GM12878 (cell line): ENCODE measurements at regions of chr6 and their contacts with region 1.

Region 1: GRCh38 chr6:157873735-157874344 is 50.8 kb downstream of the SNX9 start:
- DNase-seq: peak; percentile 16
- ATAC-seq: peak; percentile 99
- H3K4me3 ChIP-seq: no peak overlapping the region
- H3K27ac ChIP-seq: no peak overlapping the region
- H3K4me1 ChIP-seq: peaks cover 3% of the 10 kb centered on the region; the same call in 1 of the 2 replicates
- H3K27me3 ChIP-seq: peaks cover 0 to 2% of the 10 kb centered on the region in 2 experiments; a peak in 2 of 4 replicates
- CTCF ChIP-seq: peak; percentile 82 to 91 (median 84)
- EP300 ChIP-seq: no peak
- POLR2A ChIP-seq: no peak
- RAD21 ChIP-seq: peak; percentile 86

Region 2: DNA sequence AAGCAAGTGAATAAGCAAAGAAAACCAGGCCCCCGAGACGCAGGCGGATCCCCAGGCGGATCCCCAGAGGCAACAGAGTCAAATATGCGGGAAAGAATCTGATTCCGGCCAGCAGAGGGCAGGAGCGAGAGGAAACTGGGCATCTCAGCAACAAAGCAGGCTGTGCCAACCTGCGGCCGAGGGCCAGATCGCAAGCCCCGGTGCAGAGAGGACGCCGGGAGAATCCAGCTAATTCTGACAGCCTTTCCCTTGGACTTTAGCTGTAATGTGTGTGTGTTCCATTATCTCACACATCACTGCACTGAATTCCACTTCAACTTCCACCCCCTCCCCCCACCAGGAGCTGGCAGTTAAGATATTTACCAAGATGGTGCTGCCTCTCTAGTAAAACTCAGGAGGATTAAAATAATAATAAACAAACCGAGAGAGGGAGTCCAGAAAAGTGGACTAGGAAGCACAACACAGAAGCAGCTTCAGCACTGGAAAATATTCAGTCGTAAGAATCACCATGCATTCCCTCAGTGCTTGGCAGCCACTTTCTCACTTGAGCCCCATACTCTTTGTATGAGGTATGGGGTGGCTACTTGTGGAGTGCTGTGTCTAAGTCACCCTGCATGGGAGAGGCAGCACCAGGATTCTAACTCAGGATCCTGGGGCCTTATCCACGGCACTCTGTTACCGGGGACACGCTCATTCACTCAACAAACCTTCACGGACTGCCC is 117.0 kb before region 1 on chr6:
- CTCF ChIA-PET with region 1: interaction called, 197 read pairs
- POLR2A ChIA-PET with region 1: no interaction called
- RAD21 ChIA-PET with region 1: interaction called, 105 read pairs
- SMC1A ChIA-PET with region 1: interaction called, 208 read pairs
- in situ Hi-C with region 1: loop called (anchors 5 kb)
- intact Hi-C with region 1: loop called (anchors 1 kb)
- DNase-seq: no peak
- ATAC-seq: peak; percentile 71
- H3K4me3 ChIP-seq: no peak overlapping the region
- H3K27ac ChIP-seq: no peak overlapping the region
- H3K4me1 ChIP-seq: peaks cover 17% of the 10 kb centered on the region
- H3K27me3 ChIP-seq: peaks cover 0 to 3% of the 10 kb centered on the region in 2 experiments; a peak in 2 of 4 replicates
- CTCF ChIP-seq: peak; percentile 74 to 88 (median 79)
- EP300 ChIP-seq: no peak
- POLR2A ChIP-seq: no peak
- RAD21 ChIP-seq: peak; percentile 74

Region 3: GRCh38 chr6:157770946-157771345 is 102.9 kb before region 1 on chr6:
- CTCF ChIA-PET with region 1: interaction called, 12 read pairs
- POLR2A ChIA-PET with region 1: no interaction called
- RAD21 ChIA-PET with region 1: interaction called, 6 read pairs
- SMC1A ChIA-PET with region 1: interaction called, 208 read pairs
- in situ Hi-C with region 1: no loop called
- intact Hi-C with region 1: no loop called
- DNase-seq: no peak
- ATAC-seq: no peak
- H3K4me3 ChIP-seq: no peak overlapping the region
- H3K27ac ChIP-seq: no peak overlapping the region
- H3K4me1 ChIP-seq: peaks cover 22% of the 10 kb centered on the region
- H3K27me3 ChIP-seq: no peaks in the 10 kb centered on the region; a peak in 1 of 4 replicates
- CTCF ChIP-seq: no peak
- EP300 ChIP-seq: no peak
- POLR2A ChIP-seq: no peak
- RAD21 ChIP-seq: no peak

Region 4: DNA sequence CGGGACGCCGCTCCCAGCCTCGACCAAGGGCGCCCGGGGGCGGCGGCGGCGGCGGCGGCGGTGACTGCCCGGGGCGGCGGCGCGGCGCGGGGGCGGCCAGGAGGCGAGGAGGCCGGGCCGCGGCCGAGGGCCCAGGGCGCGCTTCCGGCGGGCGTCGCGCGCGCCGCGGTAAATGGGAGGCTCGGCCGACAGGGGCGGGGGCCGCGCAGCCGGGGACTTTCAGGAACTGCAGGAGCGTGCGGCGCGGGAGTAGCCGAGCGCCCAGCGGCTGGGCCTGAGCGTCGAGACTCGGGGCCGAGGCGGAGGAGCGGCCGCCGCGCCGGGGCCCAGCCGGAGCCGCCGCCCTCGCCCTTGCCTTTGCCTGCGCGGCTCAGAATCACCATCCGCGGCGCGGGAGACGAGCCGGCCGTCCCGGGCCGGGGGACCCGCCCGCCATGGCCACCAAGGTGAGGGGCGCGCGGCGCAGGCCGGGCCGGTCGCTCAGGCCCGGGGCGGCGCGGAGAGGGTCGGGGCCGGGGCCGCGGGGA is 50.8 kb before region 1 on chr6 and contains the start of gene SNX9:
- CTCF ChIA-PET with region 1: no interaction called
- POLR2A ChIA-PET with region 1: no interaction called
- RAD21 ChIA-PET with region 1: interaction called, 4 read pairs
- SMC1A ChIA-PET with region 1: interaction called, 10 read pairs
- in situ Hi-C with region 1: no loop called
- intact Hi-C with region 1: no loop called
- DNase-seq: no peak
- ATAC-seq: peak; percentile 72
- H3K4me3 ChIP-seq: peak within 1 kb of the TSS; percentile 65
- H3K27ac ChIP-seq: no peak within 1 kb of the TSS
- H3K4me1 ChIP-seq: no peaks in the 10 kb centered on the region; the same call in 1 of the 2 replicates
- H3K27me3 ChIP-seq: peaks cover 0 to 24% of the 10 kb centered on the region in 2 experiments; a peak in 2 of 4 replicates
- CTCF ChIP-seq: no peak
- EP300 ChIP-seq: no peak
- POLR2A ChIP-seq: peak; percentile 58
- RAD21 ChIP-seq: no peak
- polyA plus RNA-seq, gene SNX9: 0.03 to 0.05 TPM

Region 5: GRCh38 chr6:157885211-157885788 is 11.5 kb after region 1 on chr6:
- CTCF ChIA-PET with region 1: interaction called, 26 read pairs
- POLR2A ChIA-PET with region 1: no interaction called
- RAD21 ChIA-PET with region 1: no interaction called
- SMC1A ChIA-PET with region 1: interaction called, 16 read pairs
- in situ Hi-C with region 1: no loop called
- intact Hi-C with region 1: no loop called
- DNase-seq: no peak
- ATAC-seq: peak; percentile 40; the same call in 1 of the 3 replicates
- H3K4me3 ChIP-seq: no peak overlapping the region
- H3K27ac ChIP-seq: no peak overlapping the region
- H3K4me1 ChIP-seq: no peaks in the 10 kb centered on the region
- H3K27me3 ChIP-seq: peaks cover 2% of the 10 kb centered on the region in 2 experiments; a peak in 3 of 4 replicates
- CTCF ChIP-seq: no peak
- EP300 ChIP-seq: no peak
- POLR2A ChIP-seq: no peak
- RAD21 ChIP-seq: no peak

Region 6: GRCh38 chr6:157946865-157947532 is 73.2 kb after region 1 on chr6:
- CTCF ChIA-PET with region 1: interaction called, 14 read pairs
- POLR2A ChIA-PET with region 1: no interaction called
- RAD21 ChIA-PET with region 1: interaction called, 7 read pairs
- SMC1A ChIA-PET with region 1: interaction called, 11 read pairs
- in situ Hi-C with region 1: no loop called
- intact Hi-C with region 1: no loop called
- DNase-seq: peak; percentile 9
- ATAC-seq: peak; percentile 93
- H3K4me3 ChIP-seq: no peak overlapping the region
- H3K27ac ChIP-seq: no peak overlapping the region
- H3K4me1 ChIP-seq: no peaks in the 10 kb centered on the region
- H3K27me3 ChIP-seq: no peaks in the 10 kb centered on the region
- CTCF ChIP-seq: peak; percentile 80 to 89 (median 87)
- EP300 ChIP-seq: no peak
- POLR2A ChIP-seq: no peak
- RAD21 ChIP-seq: peak; percentile 89